ENCODE measurements at regions of chr18 and their contacts with region 1.

Region 1: GRCh38 chr18:11937874-11938478 is 29.9 kb upstream of the MPPE1 start:
- DNase-seq: peak; percentile 80
- H3K4me3 Mint-ChIP-seq: no peak overlapping the region
- H3K27ac Mint-ChIP-seq: no peak overlapping the region
- H3K4me1 Mint-ChIP-seq: peaks cover 13% of the 10 kb centered on the region
- H3K27me3 Mint-ChIP-seq: no peaks in the 10 kb centered on the region
- CTCF ChIP-seq: peak; percentile 73

Region 2: GRCh38 chr18:11925800-11926481 is 12.0 kb before region 1 on chr18:
- CTCF ChIA-PET with region 1: interaction called, 31 read pairs
- POLR2A ChIA-PET with region 1: interaction called, 3 read pairs
- intact Hi-C with region 1: no loop called
- DNase-seq: no peak
- H3K4me3 Mint-ChIP-seq: no peak overlapping the region
- H3K27ac Mint-ChIP-seq: no peak overlapping the region
- H3K4me1 Mint-ChIP-seq: no peaks in the 10 kb centered on the region
- H3K27me3 Mint-ChIP-seq: no peaks in the 10 kb centered on the region
- CTCF ChIP-seq: no peak

Region 3: GRCh38 chr18:12005538-12006487 is 67.8 kb after region 1 on chr18:
- CTCF ChIA-PET with region 1: interaction called, 458 read pairs
- POLR2A ChIA-PET with region 1: no interaction called
- intact Hi-C with region 1: no loop called
- DNase-seq: peak; percentile 49
- H3K4me3 Mint-ChIP-seq: no peak overlapping the region
- H3K27ac Mint-ChIP-seq: peak overlapping the region; percentile 43
- H3K4me1 Mint-ChIP-seq: no peaks in the 10 kb centered on the region
- H3K27me3 Mint-ChIP-seq: no peaks in the 10 kb centered on the region
- CTCF ChIP-seq: no peak

Region 4: GRCh38 chr18:12015416-12016062 is 77.6 kb after region 1 on chr18:
- CTCF ChIA-PET with region 1: interaction called, 16 read pairs
- POLR2A ChIA-PET with region 1: no interaction called
- intact Hi-C with region 1: no loop called
- DNase-seq: peak; percentile 94
- H3K4me3 Mint-ChIP-seq: no peak overlapping the region
- H3K27ac Mint-ChIP-seq: peak overlapping the region; percentile 59
- H3K4me1 Mint-ChIP-seq: peaks cover 17% of the 10 kb centered on the region
- H3K27me3 Mint-ChIP-seq: no peaks in the 10 kb centered on the region
- CTCF ChIP-seq: no peak